ENCODE measurements at regions of chr3 and their contacts with region 1.

Region 1: GRCh38 chr3:38164966-38165680 is at the start of gene OXSR1:
- DNase-seq: peak; percentile 94
- CTCF ChIP-seq: no peak

Region 2: GRCh38 chr3:38136777-38137614 is 28.1 kb before region 1 on chr3 and contains the start of gene ACAA1:
- CTCF ChIA-PET with region 1: interaction called, 30 read pairs
- POLR2A ChIA-PET with region 1: interaction called, 15 read pairs
- DNase-seq: peak; percentile 98
- CTCF ChIP-seq: no peak

Region 3: DNA sequence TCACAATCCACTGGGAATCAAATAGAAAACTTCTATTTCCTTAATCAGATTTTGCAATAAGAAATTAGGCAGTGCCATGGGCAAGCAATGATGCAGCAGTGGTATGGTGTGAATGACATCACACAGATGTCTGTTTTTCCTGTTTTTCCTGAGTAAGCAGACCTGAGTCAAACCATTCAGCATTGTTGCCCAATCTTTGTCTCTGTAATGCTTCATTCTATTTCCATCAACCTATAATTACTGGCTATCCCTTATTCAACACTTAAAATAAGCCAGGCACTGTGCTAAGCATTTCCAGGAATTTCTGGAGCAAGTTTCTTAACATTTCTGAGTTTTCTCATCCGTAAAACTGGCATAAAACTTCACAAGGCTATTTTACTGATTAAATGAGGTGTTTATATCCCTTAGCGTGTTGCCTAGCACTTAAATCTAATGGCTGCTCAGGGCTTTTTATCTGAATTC is 11.1 kb before region 1 on chr3:
- CTCF ChIA-PET with region 1: interaction called, 35 read pairs
- POLR2A ChIA-PET with region 1: interaction called, 14 read pairs
- DNase-seq: no peak
- CTCF ChIP-seq: no peak